Right cardiac atrium (tissue), 5 donors: ENCODE measurements at regions of chr9 and their contacts with region 1.

Region 1: DNA sequence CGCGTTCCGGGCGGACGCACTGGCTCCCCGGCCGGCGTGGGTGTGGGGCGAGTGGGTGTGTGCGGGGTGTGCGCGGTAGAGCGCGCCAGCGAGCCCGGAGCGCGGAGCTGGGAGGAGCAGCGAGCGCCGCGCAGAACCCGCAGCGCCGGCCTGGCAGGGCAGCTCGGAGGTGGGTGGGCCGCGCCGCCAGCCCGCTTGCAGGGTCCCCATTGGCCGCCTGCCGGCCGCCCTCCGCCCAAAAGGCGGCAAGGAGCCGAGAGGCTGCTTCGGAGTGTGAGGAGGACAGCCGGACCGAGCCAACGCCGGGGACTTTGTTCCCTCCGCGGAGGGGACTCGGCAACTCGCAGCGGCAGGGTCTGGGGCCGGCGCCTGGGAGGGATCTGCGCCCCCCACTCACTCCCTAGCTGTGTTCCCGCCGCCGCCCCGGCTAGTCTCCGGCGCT is at the start of gene DAPK1:
- DNase-seq: peak; percentile 63 to 86 (median 83)
- ATAC-seq: peak; percentile 89
- H3K4me3 ChIP-seq: peak within 1 kb of the TSS; percentile 75
- H3K27ac ChIP-seq: no peak within 1 kb of the TSS
- H3K4me1 ChIP-seq: peaks cover 3% of the 10 kb centered on the region
- H3K27me3 ChIP-seq: no peaks in the 10 kb centered on the region
- total RNA-seq, gene DAPK1: 15.1 to 20.1 (median 18.5) TPM

Region 2: GRCh38 chr9:86413966-86414880 is 1083.4 kb before region 1 on chr9:
- intact Hi-C with region 1: loop called in 1 of 4 experiments (anchors 10 kb)
- DNase-seq: no peak
- ATAC-seq: no peak
- H3K4me3 ChIP-seq: no peak overlapping the region
- H3K27ac ChIP-seq: no peak overlapping the region
- H3K4me1 ChIP-seq: no peaks in the 10 kb centered on the region
- H3K27me3 ChIP-seq: no peaks in the 10 kb centered on the region

Region 3: DNA sequence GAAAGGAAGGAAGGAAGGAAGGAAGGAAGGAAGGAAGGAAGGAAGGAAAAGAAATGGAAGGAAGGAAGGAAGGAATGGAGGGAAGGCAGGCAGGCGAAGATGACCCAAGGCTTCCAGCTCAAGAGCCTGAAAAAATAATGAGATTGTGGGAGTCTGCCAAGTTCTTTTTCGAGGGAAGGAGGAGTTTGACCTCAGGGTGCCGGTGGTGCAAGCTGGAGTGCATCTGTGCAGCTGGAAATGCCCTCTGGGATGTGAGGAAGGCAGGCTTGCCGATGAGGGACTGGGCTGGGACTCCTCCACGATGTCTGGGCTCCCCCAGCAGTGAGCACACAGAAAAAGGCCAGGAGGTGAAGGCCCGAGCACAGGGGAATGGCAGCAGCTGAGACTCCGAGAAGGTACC is 154.9 kb before region 1 on chr9:
- intact Hi-C with region 1: loop called in 2 of 4 experiments (anchors 10 kb)
- DNase-seq: peak in 2 of 3 donors; percentile 31 to 74
- ATAC-seq: peak; percentile 63 to 74
- H3K4me3 ChIP-seq: no peak overlapping the region
- H3K27ac ChIP-seq: no peak overlapping the region
- H3K4me1 ChIP-seq: peaks cover under 1% of the 10 kb centered on the region
- H3K27me3 ChIP-seq: no peaks in the 10 kb centered on the region

Region 4: GRCh38 chr9:87630266-87630665 is 132.6 kb after region 1 on chr9:
- intact Hi-C with region 1: loop called in 1 of 4 experiments (anchors 10 kb)
- DNase-seq: no peak
- ATAC-seq: no peak
- H3K4me3 ChIP-seq: no peak overlapping the region
- H3K27ac ChIP-seq: no peak overlapping the region
- H3K4me1 ChIP-seq: no peaks in the 10 kb centered on the region
- H3K27me3 ChIP-seq: no peaks in the 10 kb centered on the region